K562 (cell line): ENCODE measurements at regions of chr19 and their contacts with region 1.

Region 1: DNA sequence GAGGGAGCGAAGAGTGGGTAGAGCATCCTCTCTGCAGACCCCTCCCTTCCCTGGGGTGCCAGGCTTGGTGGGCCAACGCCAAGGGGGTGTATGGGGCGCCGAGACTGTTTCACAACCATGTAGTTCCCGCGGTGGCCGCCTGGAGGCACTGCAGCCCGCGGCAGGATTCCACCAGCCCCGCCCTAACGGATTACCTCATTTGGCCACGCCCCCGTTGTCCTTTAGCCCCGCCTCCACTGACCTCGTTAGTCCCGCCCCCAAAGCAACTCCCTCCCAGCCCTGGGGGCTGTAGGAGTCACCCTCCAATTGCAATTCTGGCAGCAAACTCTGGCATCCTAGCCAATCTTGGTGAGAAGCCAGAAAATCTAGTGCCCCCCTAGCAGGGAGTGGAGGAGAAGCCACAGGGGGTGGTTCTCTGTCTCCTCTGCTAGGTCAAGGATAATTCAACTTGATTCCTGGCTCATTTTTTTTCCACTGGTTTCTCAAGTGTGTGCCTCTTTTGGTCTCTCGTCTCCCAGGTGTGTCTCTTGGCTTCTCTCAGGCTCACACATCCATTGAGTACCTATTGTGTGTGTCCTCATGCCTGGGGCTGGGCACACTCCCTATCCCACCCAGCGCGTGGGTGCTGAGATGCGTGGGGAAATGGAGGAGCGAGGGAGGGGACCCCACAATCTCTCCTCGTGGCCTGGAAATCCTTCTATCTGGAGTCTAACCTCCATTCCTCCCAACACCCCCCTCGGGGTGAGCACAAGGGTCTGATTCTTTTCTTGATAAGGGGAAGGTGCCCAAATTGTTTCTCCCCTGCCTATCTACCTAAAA is 2.0 kb downstream of the OLFM2 start:
- DNase-seq: peak; percentile 86 to 94 (median 86)
- ATAC-seq: peak; percentile 93
- H3K4me3 ChIP-seq: no peak overlapping the region
- H3K27ac ChIP-seq: no peak overlapping the region
- H3K4me1 ChIP-seq: peaks cover 3 to 17% of the 10 kb centered on the region in 2 experiments; a peak in 3 of 5 replicates
- H3K27me3 ChIP-seq: peaks cover 0 to 6% of the 10 kb centered on the region in 2 experiments; a peak in 1 of 5 replicates
- CTCF ChIP-seq: peak; percentile 93 to 98 (median 93)
- EP300 ChIP-seq: no peak
- POLR2A ChIP-seq: no peak
- RAD21 ChIP-seq: peak; percentile 94 to 95

Region 2: GRCh38 chr19:10000171-10000826 is 66.0 kb after region 1 on chr19:
- CTCF ChIA-PET with region 1: interaction called, 12 read pairs
- POLR2A ChIA-PET with region 1: no interaction called
- in situ Hi-C with region 1: loop called (anchors 5 kb)
- intact Hi-C with region 1: loop called (anchors 1 kb)
- DNase-seq: peak; percentile 76 to 87 (median 86)
- ATAC-seq: peak; percentile 79
- H3K4me3 ChIP-seq: no peak overlapping the region
- H3K27ac ChIP-seq: no peak overlapping the region
- H3K4me1 ChIP-seq: peaks cover 0 to 4% of the 10 kb centered on the region in 2 experiments; a peak in 2 of 5 replicates
- H3K27me3 ChIP-seq: peaks cover 3 to 13% of the 10 kb centered on the region in 2 experiments; a peak in 3 of 5 replicates
- CTCF ChIP-seq: peak; percentile 84 to 88 (median 88)
- EP300 ChIP-seq: no peak
- POLR2A ChIP-seq: no peak
- RAD21 ChIP-seq: peak in 1 of 2 experiments; percentile 67; a peak in 3 of 4 replicates

Region 3: DNA sequence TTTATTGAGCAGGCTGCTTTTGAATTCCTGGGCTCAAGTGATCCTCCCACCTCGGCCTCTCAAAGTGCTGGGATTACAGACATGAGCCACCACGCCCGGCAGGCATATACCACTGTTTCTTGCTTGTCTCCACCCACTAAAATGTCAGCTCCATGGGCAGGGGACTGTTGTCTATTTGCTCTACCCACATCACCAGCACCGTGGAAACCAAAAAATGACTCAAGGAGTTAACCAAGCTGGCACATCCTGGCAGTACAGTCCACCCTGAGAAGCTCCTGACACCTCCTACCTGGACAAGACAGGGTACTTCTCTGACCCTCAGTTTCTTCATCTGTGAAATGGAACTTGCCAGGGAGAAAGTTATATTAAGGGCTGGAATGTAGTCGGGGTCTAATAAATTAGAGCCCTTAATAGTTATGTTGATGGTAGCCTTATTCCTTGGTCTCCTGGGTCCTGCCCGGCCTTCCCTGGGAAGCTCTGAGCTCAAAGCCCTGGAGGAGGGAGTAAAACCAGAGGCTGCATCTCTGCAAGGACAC is 92.9 kb after region 1 on chr19:
- CTCF ChIA-PET with region 1: interaction called, 29 read pairs
- POLR2A ChIA-PET with region 1: interaction called, 4 read pairs
- in situ Hi-C with region 1: loop called (anchors 10 kb)
- intact Hi-C with region 1: loop called (anchors 1 kb)
- DNase-seq: no peak
- ATAC-seq: no peak
- H3K4me3 ChIP-seq: no peak overlapping the region
- H3K27ac ChIP-seq: no peak overlapping the region
- H3K4me1 ChIP-seq: peaks cover 0 to 8% of the 10 kb centered on the region in 2 experiments; a peak in 2 of 5 replicates
- H3K27me3 ChIP-seq: peaks cover 28 to 39% of the 10 kb centered on the region in 2 experiments
- CTCF ChIP-seq: no peak
- EP300 ChIP-seq: no peak
- POLR2A ChIP-seq: no peak
- RAD21 ChIP-seq: no peak

Region 4: DNA sequence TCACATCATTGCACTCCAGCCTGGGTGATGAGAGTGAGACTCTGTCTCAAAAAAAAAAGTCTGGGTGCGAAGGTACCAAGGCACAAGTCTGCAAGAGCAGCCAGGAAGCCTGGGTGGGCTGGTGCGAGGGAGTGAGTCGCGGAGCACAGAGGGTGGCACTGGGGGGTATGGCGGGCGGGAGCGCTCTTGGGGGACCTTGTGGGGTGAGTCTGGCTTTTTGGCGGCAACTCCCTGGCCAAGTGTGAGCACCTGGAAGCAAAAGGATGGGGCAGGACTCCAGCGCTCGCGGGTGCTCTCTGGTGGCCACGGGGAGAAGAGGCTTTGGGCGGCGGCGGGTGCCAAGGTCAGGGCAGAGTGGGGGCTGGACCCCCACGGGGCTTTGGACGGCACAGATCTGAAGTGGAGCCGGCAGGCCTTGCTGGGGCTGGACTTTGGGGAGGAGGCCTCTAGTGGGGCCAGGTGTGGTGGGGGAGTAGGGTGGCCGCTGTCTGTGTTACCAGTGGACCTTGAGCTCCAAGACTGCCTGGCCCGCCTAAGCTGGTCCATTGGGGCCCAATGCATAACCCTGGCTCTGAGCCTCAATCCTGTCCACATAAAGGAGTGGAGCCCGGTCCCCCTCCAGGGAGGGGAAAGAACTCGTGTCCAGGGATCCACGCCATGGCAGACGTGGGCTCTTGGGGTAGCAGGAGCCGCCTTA is 178.7 kb after region 1 on chr19:
- CTCF ChIA-PET with region 1: interaction called, 3 read pairs
- POLR2A ChIA-PET with region 1: interaction called, 7 read pairs
- in situ Hi-C with region 1: no loop called
- intact Hi-C with region 1: loop called (anchors 5 kb)
- DNase-seq: peak; percentile 56 to 82 (median 60)
- ATAC-seq: peak; percentile 83
- H3K4me3 ChIP-seq: no peak overlapping the region
- H3K27ac ChIP-seq: no peak overlapping the region
- H3K4me1 ChIP-seq: peaks cover 0 to 84% of the 10 kb centered on the region in 2 experiments; a peak in 3 of 5 replicates
- H3K27me3 ChIP-seq: no peaks in the 10 kb centered on the region
- CTCF ChIP-seq: peak; percentile 73 to 82 (median 77)
- EP300 ChIP-seq: no peak
- POLR2A ChIP-seq: peak; percentile 73
- RAD21 ChIP-seq: peak; percentile 58 to 60

Region 5: DNA sequence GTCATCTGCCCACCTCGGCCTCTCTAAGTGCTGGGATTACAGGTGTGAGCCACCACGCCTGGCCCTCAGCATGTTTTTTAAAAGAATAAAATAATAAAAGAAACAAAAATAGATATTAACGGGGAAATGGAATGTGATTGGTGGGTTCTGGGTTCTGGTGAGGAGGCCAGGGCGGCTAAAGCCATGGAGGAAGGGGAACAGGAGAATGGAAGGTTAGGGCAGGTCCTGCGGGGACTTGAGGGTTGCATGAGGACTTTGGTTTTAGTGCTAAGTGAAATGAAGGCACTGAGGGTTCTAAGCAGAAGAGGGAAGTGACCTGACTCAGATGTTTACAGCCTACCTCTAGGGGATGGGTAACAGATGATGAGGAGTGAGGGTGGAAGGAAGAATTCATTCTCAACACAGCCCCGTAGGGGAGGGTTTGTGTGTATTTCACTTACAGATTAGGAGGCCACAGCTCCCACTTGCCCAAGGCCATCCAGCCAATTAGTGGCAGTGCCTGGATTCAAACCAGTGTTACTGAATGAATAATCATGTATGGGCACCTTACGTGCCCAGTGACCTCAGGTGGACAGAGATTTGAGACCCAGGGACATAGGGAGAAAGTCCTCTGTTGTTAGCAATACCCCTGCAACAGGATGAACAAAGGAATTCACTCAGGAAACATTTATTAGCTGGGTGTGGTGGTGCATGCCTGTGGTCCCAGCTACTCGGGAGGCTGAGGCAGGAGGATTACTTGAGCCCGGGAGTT is 311.0 kb after region 1 on chr19:
- CTCF ChIA-PET with region 1: interaction called, 8 read pairs
- POLR2A ChIA-PET with region 1: no interaction called
- in situ Hi-C with region 1: loop called (anchors 5 kb)
- intact Hi-C with region 1: loop called (anchors 5 kb)
- DNase-seq: peak in 1 of 4 experiments; percentile 5
- ATAC-seq: no peak
- H3K4me3 ChIP-seq: no peak overlapping the region
- H3K27ac ChIP-seq: no peak overlapping the region
- H3K4me1 ChIP-seq: peaks cover 1 to 3% of the 10 kb centered on the region in 2 experiments; a peak in 4 of 5 replicates
- H3K27me3 ChIP-seq: no peaks in the 10 kb centered on the region
- CTCF ChIP-seq: no peak
- EP300 ChIP-seq: no peak
- POLR2A ChIP-seq: no peak
- RAD21 ChIP-seq: no peak

Region 6: DNA sequence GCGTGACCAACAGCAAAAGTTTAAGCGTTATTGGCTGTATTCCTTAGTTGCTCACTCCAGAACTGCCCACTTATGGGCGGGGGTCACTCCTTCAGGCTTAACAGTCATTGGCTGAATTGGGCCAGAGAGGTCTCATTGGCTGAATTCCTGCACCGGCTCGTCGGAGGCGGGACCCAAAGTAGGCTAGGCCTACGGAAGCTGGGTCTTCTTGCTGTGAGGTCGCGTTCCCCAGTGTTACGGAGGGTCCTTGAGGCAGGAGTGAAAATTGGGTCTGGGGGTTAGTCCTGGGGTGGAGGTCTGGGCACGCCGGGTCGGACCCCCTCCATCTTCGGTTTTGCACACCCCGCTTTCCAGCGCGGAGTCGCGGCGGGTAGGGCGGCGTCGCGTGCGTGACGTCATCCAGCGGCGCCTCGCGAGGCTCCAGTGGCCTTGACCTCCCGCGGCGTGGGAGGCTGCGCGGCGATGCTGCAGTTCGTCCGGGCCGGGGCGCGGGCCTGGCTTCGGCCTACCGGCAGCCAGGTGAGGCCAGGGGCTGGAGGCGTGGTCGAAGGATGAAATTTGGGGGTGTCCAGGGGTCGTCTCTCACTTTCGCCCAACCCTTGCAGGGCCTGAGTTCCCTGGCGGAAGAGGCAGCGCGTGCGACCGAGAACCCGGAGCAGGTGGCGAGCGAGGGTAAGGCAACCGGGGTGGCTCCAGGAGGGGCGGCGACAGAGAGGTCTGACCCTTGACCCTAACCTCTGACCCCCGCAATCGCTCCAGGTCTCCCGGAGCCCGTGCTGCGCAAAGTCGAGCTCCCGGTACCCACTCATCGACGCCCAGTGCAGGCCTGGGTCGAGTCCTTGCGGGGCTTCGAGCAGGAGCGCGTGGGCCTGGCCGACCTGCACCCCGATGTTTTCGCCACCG is 317.7 kb after region 1 on chr19 and contains the start of gene MRPL4:
- CTCF ChIA-PET with region 1: interaction called, 8 read pairs
- POLR2A ChIA-PET with region 1: no interaction called
- in situ Hi-C with region 1: loop called (anchors 5 kb)
- intact Hi-C with region 1: loop called (anchors 5 kb)
- DNase-seq: peak; percentile 96 to 99 (median 97)
- ATAC-seq: peak; percentile 98
- H3K4me3 ChIP-seq: peak within 1 kb of the TSS; percentile 76
- H3K27ac ChIP-seq: peak within 1 kb of the TSS; percentile 90
- H3K4me1 ChIP-seq: peaks cover 4 to 39% of the 10 kb centered on the region in 2 experiments; a peak in 4 of 5 replicates
- H3K27me3 ChIP-seq: no peaks in the 10 kb centered on the region
- CTCF ChIP-seq: 0 out of 6 replicates have a peak, but pooled peaks of 1 of the 3 experiments have one; percentile 2
- EP300 ChIP-seq: 0 out of 2 replicates have a peak, but pooled peaks have one; percentile 39
- POLR2A ChIP-seq: peak; percentile 90
- RAD21 ChIP-seq: no peak
- polyA plus RNA-seq, gene MRPL4: 1.4 to 5.0 TPM

Region 7: DNA sequence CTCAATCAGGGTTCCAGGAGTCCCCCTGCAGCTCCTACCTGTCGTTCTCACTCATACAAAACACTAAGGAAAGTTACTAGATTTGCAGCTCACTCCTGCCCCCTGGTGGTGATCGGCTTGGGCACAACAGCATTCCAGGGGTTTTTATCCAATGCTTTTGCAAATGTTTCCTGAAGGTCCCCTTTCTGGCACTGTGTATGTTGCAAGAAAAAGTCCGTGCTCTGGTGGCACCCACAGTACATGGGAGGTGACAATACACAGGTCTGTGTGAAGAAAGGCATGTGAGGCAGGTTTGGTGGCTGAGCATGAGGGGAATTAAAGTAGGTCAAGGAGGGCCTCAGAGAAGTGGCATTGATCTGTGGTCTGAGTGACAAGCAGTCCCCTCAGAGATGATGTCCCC is 454.6 kb after region 1 on chr19:
- CTCF ChIA-PET with region 1: interaction called, 6 read pairs
- POLR2A ChIA-PET with region 1: no interaction called
- in situ Hi-C with region 1: loop called (anchors 5 kb)
- intact Hi-C with region 1: loop called (anchors 5 kb)
- DNase-seq: peak; percentile 57 to 91 (median 68)
- ATAC-seq: peak; percentile 84
- H3K4me3 ChIP-seq: no peak overlapping the region
- H3K27ac ChIP-seq: no peak overlapping the region
- H3K4me1 ChIP-seq: peaks cover 0 to 6% of the 10 kb centered on the region in 2 experiments; a peak in 2 of 5 replicates
- H3K27me3 ChIP-seq: no peaks in the 10 kb centered on the region
- CTCF ChIP-seq: peak; percentile 92 to 95 (median 94)
- EP300 ChIP-seq: no peak
- POLR2A ChIP-seq: peak; percentile 56
- RAD21 ChIP-seq: peak; percentile 92 to 96